ENCODE measurements at regions of chr9 and their contacts with region 1.

Region 1: DNA sequence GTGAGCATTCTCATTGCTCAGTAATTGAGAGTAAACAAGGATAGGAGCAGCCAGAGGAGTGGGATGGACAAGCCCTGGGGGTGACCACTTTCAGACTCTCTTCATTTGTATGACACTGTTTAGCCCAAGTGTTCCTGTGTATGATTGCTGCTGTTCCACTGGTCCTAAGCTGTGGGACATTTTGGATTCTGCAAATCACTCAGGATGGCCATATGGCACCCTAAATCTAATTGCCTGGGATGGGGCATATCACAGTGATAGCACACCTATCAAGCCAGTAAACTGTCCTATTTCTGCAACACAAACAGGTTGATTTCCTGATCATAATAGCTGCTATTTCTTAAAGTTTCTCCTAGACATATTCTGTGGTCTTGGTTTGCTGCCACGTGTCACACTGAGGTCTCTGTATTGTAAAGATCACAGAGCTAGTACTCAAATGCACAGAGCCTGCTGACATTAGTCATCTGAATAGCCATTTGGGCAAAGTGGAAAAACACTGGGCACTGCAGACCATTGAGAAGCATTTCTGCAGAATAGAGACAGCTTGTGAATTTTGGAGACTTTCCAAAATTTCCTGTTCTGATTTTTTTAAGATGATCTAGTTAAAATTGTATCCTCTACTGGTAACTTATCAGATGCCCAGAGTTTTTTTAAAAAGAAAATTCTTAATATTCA is 320.2 kb downstream of the RFX3 start:
- DNase-seq: no peak
- H3K4me3 ChIP-seq: no peak overlapping the region
- H3K27ac ChIP-seq: no peak overlapping the region
- H3K4me1 ChIP-seq: no peaks in the 10 kb centered on the region
- H3K27me3 ChIP-seq: no peaks in the 10 kb centered on the region
- CTCF ChIP-seq: no peak
- POLR2A ChIP-seq: no peak

Region 2: GRCh38 chr9:3181049-3181953 is 24.3 kb before region 1 on chr9:
- intact Hi-C with region 1: no loop called
- DNase-seq: peak in 1 of 2 donors; percentile 24
- H3K4me3 ChIP-seq: peak overlapping the region; percentile 1 to 60 (median 38)
- H3K27ac ChIP-seq: no peak overlapping the region
- H3K4me1 ChIP-seq: no peaks in the 10 kb centered on the region
- H3K27me3 ChIP-seq: peaks cover 0 to 21% of the 10 kb centered on the region in 2 donors
- CTCF ChIP-seq: peak in 1 of 3 donors; percentile 45
- POLR2A ChIP-seq: no peak

Region 3: DNA sequence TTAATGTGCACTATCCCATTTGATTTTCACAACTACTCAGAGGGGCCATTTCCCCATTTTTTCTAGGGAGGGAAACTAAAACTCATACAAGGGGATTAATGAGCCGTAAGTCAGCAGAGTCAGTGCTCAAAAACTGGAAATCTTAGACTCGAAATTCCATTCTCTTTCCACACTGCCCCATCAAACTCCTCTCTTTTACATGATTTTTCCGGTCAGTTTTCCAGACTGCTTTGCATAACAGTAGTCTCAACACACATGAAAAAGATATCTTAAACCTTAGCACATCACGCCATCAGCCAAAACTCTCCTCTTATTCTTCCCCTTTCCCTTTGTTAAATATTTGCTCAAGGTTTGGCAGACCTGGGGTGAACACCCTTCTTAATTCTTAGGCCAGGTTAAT is 11.8 kb before region 1 on chr9:
- intact Hi-C with region 1: loop called (anchors 1 kb)
- DNase-seq: no peak
- H3K4me3 ChIP-seq: no peak overlapping the region
- H3K27ac ChIP-seq: no peak overlapping the region
- H3K4me1 ChIP-seq: no peaks in the 10 kb centered on the region
- H3K27me3 ChIP-seq: no peaks in the 10 kb centered on the region
- CTCF ChIP-seq: no peak
- POLR2A ChIP-seq: no peak

Region 4: GRCh38 chr9:4315582-4316215 is 1110.1 kb after region 1 on chr9:
- intact Hi-C with region 1: no loop called
- DNase-seq: peak; percentile 46 to 81
- H3K4me3 ChIP-seq: no peak overlapping the region
- H3K27ac ChIP-seq: no peak overlapping the region
- H3K4me1 ChIP-seq: no peaks in the 10 kb centered on the region
- H3K27me3 ChIP-seq: no peaks in the 10 kb centered on the region
- CTCF ChIP-seq: peak; percentile 54 to 70 (median 63)
- POLR2A ChIP-seq: no peak

Region 5: GRCh38 chr9:4725706-4726442 is 1520.3 kb after region 1 on chr9:
- intact Hi-C with region 1: no loop called
- DNase-seq: no peak
- H3K4me3 ChIP-seq: no peak overlapping the region
- H3K27ac ChIP-seq: no peak overlapping the region
- H3K4me1 ChIP-seq: no peaks in the 10 kb centered on the region
- H3K27me3 ChIP-seq: no peaks in the 10 kb centered on the region
- CTCF ChIP-seq: no peak
- POLR2A ChIP-seq: no peak

Measured in breast epithelium (tissue), 4 donors.